HepG2 (cell line): ENCODE measurements at regions of chr9 and their contacts with region 1.

Region 1: GRCh38 chr9:97632985-97633858 is at the starts of genes NCBP1 and TSTD2:
- DNase-seq: peak; percentile 95
- ATAC-seq: peak; percentile 96
- H3K4me3 ChIP-seq: peak within 1 kb of the TSS; percentile 89 to 96 (median 89)
- H3K27ac ChIP-seq: peak within 1 kb of the TSS; percentile 98
- H3K4me1 ChIP-seq: peaks cover 51% of the 10 kb centered on the region
- H3K27me3 ChIP-seq: peaks cover 0 to 8% of the 10 kb centered on the region in 2 experiments; a peak in 1 of 5 replicates
- CTCF ChIP-seq: peak; percentile 21; the same call in 1 of the 2 replicates
- EP300 ChIP-seq: 0 out of 4 replicates have a peak, but pooled peaks of 1 of the 2 experiments have one; percentile 11
- POLR2A ChIP-seq: peak; percentile 77 to 93
- RAD21 ChIP-seq: 0 out of 2 replicates have a peak, but pooled peaks have one; percentile 8
- total RNA-seq, gene NCBP1: 40.2 and 46.5 TPM in 2 replicates
- total RNA-seq, gene TSTD2: 16.0 and 17.0 TPM in 2 replicates

Region 2: DNA sequence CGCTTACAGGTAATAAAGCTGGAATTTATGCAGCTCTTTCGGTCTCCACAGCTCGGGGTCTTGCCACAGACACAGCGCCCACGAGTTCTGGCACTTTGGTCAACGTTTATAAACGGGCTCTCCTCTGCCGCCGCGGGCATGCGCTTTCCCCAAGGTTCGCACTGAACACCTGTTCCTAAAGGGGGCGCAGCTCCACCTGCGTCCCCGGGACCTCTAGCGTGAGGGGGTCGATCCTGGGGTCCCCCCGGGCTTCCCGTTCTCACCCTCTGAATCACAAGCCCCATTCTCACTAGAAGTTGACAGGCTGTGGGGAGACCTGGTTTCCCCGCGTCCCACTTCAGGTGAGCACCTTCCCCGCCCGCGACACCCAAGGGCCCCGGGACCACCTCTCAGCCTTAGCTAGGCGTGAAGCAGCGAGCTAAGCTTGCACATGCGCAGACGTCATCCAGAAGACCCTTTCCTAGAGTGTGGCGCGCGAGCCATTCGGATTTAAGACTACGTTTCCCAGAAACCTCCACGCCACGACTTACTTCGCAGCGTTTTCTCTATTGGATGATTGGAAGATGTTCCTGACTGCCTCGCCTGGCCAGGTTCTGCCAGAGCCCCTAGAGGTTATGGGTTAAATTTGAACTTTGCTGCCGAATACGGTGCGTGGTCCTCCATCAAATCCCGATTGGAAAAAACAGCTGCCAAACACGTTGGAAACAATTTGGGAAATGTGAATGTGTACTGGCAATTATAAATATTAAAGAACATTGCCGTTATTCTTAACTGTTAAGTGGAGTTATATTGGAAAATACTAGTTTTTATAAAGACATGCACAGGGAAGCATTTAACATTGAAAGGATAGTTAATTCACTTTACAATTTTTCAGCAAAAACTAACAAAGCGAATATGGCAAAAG is 757.5 kb before region 1 on chr9:
- CTCF ChIA-PET with region 1: no interaction called
- POLR2A ChIA-PET with region 1: interaction called, 11 read pairs
- in situ Hi-C with region 1: no loop called
- intact Hi-C with region 1: no loop called
- DNase-seq: peak; percentile 96
- ATAC-seq: peak; percentile 92
- H3K4me3 ChIP-seq: peak overlapping the region; percentile 53 to 74 (median 59)
- H3K27ac ChIP-seq: peak overlapping the region; percentile 71
- H3K4me1 ChIP-seq: peaks cover 18% of the 10 kb centered on the region
- H3K27me3 ChIP-seq: no peaks in the 10 kb centered on the region; a peak in 1 of 5 replicates
- CTCF ChIP-seq: peak; percentile 80
- EP300 ChIP-seq: no peak
- POLR2A ChIP-seq: peak in 1 of 2 experiments; percentile 75; a peak in 3 of 4 replicates
- RAD21 ChIP-seq: peak; percentile 39; the same call in 1 of the 2 replicates

Region 3: GRCh38 chr9:97406620-97407177 is 226.5 kb before region 1 on chr9:
- CTCF ChIA-PET with region 1: no interaction called
- POLR2A ChIA-PET with region 1: interaction called, 10 read pairs
- in situ Hi-C with region 1: no loop called
- intact Hi-C with region 1: no loop called
- DNase-seq: peak; percentile 89
- ATAC-seq: peak; percentile 58
- H3K4me3 ChIP-seq: peak overlapping the region; percentile 15 to 57 (median 35); a peak in 3 of 6 replicates
- H3K27ac ChIP-seq: peak overlapping the region; percentile 88
- H3K4me1 ChIP-seq: peaks cover 68% of the 10 kb centered on the region
- H3K27me3 ChIP-seq: no peaks in the 10 kb centered on the region
- CTCF ChIP-seq: no peak
- EP300 ChIP-seq: no peak; a peak in 1 of 4 replicates
- POLR2A ChIP-seq: no peak
- RAD21 ChIP-seq: no peak

Region 4: GRCh38 chr9:97696803-97697601 is 63.8 kb after region 1 on chr9 and contains the start of gene XPA:
- CTCF ChIA-PET with region 1: no interaction called
- POLR2A ChIA-PET with region 1: interaction called, 20 read pairs
- in situ Hi-C with region 1: no loop called
- intact Hi-C with region 1: no loop called
- DNase-seq: peak; percentile 92
- ATAC-seq: peak; percentile 95
- H3K4me3 ChIP-seq: peak within 1 kb of the TSS; percentile 83 to 86 (median 85)
- H3K27ac ChIP-seq: peak within 1 kb of the TSS; percentile 82
- H3K4me1 ChIP-seq: peaks cover 66% of the 10 kb centered on the region
- H3K27me3 ChIP-seq: no peaks in the 10 kb centered on the region
- CTCF ChIP-seq: no peak
- EP300 ChIP-seq: no peak
- POLR2A ChIP-seq: peak; percentile 87 to 94
- RAD21 ChIP-seq: peak; percentile 63
- total RNA-seq, gene XPA: 12.5 and 15.2 TPM in 2 replicates

Region 5: DNA sequence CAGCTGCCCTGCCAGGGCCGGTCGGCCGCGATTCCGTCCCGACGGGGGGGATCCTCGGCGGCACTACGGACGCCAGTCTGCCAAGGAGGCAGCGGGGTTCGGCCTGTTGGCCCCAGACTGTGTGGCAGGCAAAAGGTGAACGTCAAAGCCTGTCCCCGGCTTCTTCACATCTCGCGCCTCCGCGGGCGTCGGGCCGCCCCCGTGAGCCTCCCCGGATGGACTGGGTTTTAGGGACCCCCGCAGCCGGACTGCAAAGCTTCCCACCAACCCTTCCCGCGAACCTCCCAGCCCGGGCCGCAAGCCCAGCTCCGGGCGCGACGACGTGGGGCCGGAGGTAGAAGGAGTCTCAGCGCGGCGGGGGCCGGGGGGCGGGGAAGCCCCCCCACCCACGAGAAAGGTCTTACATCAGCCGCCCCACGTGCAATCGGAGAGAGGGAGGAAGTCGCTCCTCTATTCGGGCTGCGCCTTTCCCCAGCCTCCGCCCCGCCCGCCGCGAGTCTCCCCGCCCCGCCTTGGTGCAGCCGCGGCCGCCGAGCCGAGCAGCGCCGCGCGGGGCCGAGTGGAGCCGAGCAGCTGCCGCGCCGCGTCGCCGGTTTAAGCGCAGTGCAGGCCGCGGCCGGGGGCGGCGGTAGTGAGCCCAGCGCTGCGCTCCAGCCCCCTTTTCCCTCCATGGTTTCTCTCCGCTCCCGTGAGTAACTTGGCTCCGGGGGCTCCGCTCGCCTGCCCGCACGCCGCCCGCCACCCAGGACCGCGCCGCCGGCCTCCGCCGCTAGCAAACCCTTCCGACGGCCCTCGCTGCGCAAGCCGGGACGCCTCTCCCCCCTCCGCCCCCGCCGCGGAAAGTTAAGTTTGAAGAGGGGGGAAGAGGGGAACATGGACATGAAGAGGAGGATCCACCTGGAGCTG is 349.7 kb after region 1 on chr9 and contains the start of gene ANP32B:
- CTCF ChIA-PET with region 1: no interaction called
- POLR2A ChIA-PET with region 1: interaction called, 13 read pairs
- in situ Hi-C with region 1: no loop called
- intact Hi-C with region 1: loop called (anchors 10 kb)
- DNase-seq: peak; percentile 67
- ATAC-seq: peak; percentile 90
- H3K4me3 ChIP-seq: peak within 1 kb of the TSS; percentile 84 to 93 (median 90)
- H3K27ac ChIP-seq: peak within 1 kb of the TSS; percentile 95
- H3K4me1 ChIP-seq: peaks cover 52% of the 10 kb centered on the region
- H3K27me3 ChIP-seq: no peaks in the 10 kb centered on the region; a peak in 2 of 5 replicates
- CTCF ChIP-seq: peak; percentile 76
- EP300 ChIP-seq: peak in 1 of 2 experiments; percentile 22; a peak in 1 of 4 replicates
- POLR2A ChIP-seq: peak; percentile 17 to 55; a peak in 3 of 4 replicates
- RAD21 ChIP-seq: peak; percentile 58
- total RNA-seq, gene ANP32B: 22.1 and 67.0 TPM in 2 replicates